H1 (cell line): ENCODE measurements at regions of chr14 and their contacts with region 1.

Region 1: DNA sequence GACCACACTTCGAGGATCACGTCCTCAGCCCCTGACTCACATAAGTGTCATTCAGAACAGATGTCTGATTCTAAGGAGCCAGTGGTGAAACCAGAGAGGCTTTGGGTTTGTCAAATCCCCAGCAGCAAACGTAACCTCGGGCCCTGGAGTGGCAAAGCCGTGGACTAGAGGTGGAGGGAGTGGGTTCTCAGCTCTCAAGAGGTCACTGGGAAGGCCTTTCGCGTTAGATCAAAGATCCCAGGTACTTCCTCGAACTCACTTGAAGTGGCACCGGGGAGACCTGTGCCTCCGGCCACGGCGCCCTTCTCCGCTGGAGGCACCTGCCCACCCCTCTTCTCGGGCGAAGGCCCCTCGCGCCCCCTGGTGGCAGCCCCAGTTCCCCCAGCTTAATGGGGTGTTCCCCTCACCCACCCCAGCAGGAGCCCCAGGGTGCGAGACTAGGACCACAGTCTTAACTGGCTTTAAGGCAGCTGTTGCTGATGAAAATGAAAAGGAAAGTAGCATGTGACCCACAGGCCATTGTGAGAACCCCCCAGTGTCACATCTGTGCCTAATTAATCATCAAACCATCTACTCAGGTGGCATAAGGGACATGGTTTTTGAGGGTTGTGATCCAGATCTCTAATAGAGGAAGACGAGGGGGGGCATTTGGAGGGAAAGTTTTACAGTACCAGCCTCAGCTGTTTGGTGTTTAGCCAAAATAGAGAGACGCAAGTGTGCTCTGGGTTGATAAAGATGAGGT is 672 bp upstream of the ESR2 start:
- DNase-seq: peak; percentile 51 to 97
- H3K4me3 ChIP-seq: peak overlapping the region; percentile 20 to 60 (median 52)
- H3K27ac ChIP-seq: no peak overlapping the region
- H3K4me1 ChIP-seq: peaks cover 0 to 3% (median 2%) of the 10 kb centered on the region in 4 experiments; a peak in 3 of 7 replicates
- H3K27me3 ChIP-seq: peaks cover 0 to 20% (median 16%) of the 10 kb centered on the region in 4 experiments; a peak in 6 of 7 replicates
- CTCF ChIP-seq: peak; percentile 84 to 94 (median 91)
- EP300 ChIP-seq: 0 out of 3 replicates have a peak, but pooled peaks of 1 of the 2 experiments have one; percentile 25
- POLR2A ChIP-seq: no peak
- RAD21 ChIP-seq: peak; percentile 84 to 91

Region 2: DNA sequence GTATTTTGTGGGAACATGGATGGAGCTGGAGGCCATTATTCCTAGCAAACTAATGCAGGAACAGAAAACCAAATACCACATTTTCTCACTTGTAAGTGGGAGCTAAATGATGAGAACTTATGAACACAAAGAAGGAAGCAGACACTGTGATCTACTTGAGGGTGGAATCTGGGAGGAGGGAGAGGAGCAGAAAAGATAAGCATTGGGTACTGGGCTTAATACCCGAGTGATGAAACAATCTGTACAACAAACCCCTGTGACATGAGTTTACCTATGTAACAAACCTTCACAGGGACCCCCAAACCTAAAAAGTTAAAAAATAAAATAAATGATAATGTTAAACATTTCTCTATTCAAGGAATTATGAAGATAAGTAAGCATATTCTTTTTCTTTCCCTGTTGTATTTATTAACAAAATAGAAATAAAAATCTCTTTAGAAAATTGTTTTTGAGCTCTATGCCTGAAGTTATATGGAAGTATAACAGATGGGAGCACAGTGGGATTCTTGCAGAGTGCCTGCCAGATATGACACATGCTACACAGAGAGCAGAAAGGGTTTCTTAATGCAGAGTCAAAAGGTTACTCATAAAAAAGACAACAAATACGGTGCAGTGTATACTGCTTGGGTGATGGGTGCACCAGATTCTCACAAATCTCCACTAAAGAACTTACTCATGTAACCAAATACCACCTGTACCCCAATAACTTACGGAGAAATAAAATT is 494.0 kb before region 1 on chr14:
- CTCF ChIA-PET with region 1: interaction called, 10 read pairs
- POLR2A ChIA-PET with region 1: no interaction called
- DNase-seq: no peak
- H3K4me3 ChIP-seq: no peak overlapping the region
- H3K27ac ChIP-seq: no peak overlapping the region
- H3K4me1 ChIP-seq: no peaks in the 10 kb centered on the region; a peak in 1 of 7 replicates
- H3K27me3 ChIP-seq: no peaks in the 10 kb centered on the region
- CTCF ChIP-seq: no peak
- EP300 ChIP-seq: no peak
- POLR2A ChIP-seq: no peak
- RAD21 ChIP-seq: no peak

Region 3: DNA sequence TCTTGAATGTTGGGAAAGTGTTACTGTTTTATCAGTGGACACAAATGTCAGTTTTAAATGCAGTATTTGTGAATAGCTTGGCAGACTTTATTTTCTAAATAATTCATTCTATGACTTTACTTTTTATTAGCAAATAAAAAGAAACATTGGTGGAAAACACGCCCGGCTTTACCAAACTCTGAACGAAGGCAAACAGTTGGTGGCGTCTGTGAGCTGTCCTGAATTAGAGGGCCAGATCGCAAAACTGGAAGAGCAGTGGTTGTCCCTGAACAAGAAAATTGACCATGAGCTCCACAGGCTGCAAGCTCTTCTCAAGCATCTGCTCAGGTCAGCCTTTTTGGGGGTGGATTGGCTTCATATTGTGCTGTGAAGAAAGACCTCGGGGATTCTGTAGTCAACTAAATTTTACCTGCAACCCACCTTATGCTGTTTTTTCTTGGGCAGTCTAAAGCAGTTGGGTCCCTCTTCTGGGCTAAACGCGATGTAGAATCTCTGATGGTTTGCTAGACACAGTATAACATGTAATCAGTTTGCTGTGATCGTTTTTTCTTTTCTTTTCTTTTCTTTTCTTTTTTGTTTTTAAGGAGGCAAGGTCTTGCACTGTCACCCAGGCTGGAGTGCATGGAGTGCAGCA is 157.1 kb before region 1 on chr14:
- CTCF ChIA-PET with region 1: interaction called, 31 read pairs
- POLR2A ChIA-PET with region 1: no interaction called
- DNase-seq: no peak
- H3K4me3 ChIP-seq: no peak overlapping the region
- H3K27ac ChIP-seq: no peak overlapping the region
- H3K4me1 ChIP-seq: no peaks in the 10 kb centered on the region; a peak in 1 of 7 replicates
- H3K27me3 ChIP-seq: no peaks in the 10 kb centered on the region
- CTCF ChIP-seq: peak; percentile 10 to 52 (median 39)
- EP300 ChIP-seq: no peak
- POLR2A ChIP-seq: no peak
- RAD21 ChIP-seq: peak; percentile 67 to 69

Region 4: GRCh38 chr14:64281805-64282204 is 13.0 kb before region 1 on chr14:
- CTCF ChIA-PET with region 1: interaction called, 31 read pairs
- POLR2A ChIA-PET with region 1: no interaction called
- DNase-seq: no peak
- H3K4me3 ChIP-seq: no peak overlapping the region
- H3K27ac ChIP-seq: no peak overlapping the region
- H3K4me1 ChIP-seq: peaks cover 0 to 8% (median under 1%) of the 10 kb centered on the region in 4 experiments; a peak in 1 of 7 replicates
- H3K27me3 ChIP-seq: no peaks in the 10 kb centered on the region
- CTCF ChIP-seq: no peak
- EP300 ChIP-seq: no peak
- POLR2A ChIP-seq: no peak
- RAD21 ChIP-seq: no peak